Activated CD4-positive, alpha-beta memory T cell treated with anti-CD3 and anti-CD28 coated beads for 36 hours (primary cell): ENCODE measurements at regions of chr5 and their contacts with region 1.

Region 1: GRCh38 chr5:33440482-33441240 is at the start of gene TARS1:
- DNase-seq: peak; percentile 97
- H3K4me3 Mint-ChIP-seq: no peak within 1 kb of the TSS
- H3K27ac Mint-ChIP-seq: no peak within 1 kb of the TSS
- H3K4me1 Mint-ChIP-seq: peaks cover 24% of the 10 kb centered on the region
- H3K27me3 Mint-ChIP-seq: no peaks in the 10 kb centered on the region
- total RNA-seq, gene TARS1: 240 to 248 TPM

Region 2: GRCh38 chr5:32444431-32445286 is 996.0 kb before region 1 on chr5 and contains the start of gene ZFR:
- CTCF ChIA-PET with region 1: no interaction called
- POLR2A ChIA-PET with region 1: no interaction called
- intact Hi-C with region 1: loop called (anchors 2 kb)
- DNase-seq: peak; percentile 96
- H3K4me3 Mint-ChIP-seq: peak within 1 kb of the TSS; percentile 92
- H3K27ac Mint-ChIP-seq: peak within 1 kb of the TSS; percentile 98
- H3K4me1 Mint-ChIP-seq: peaks cover 38% of the 10 kb centered on the region
- H3K27me3 Mint-ChIP-seq: no peaks in the 10 kb centered on the region
- total RNA-seq, gene ZFR: 58.1 to 61.1 TPM

Region 3: DNA sequence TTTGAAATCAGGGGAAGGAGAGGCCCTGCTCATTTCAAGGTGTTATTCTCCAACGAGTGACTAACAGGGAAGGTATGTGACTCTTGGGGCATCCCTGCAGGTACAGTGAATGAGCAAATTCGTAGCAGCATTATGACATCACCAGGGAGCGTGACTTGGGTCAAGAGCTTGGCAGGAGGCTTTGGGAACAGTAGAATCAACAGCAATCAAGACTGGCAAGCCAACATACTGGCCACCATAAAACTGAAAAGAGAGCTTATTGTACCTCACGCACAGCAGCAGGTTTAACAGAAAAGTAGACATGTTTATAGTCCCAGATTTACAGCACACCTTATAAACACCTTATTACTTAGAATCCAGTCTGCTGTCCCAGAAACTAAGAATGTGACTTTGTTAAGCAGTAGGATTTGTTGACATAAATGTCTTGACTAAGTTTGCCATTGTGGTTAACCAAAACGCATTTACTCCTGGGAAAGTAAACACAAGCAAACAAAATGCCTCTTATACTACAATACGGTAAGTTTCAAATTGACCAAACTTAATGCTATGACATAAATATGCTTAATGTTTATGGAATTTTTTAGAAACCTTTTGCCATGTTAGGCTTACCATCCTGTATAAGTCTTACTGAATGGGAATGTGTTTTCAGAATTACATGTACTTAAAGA is 431.8 kb before region 1 on chr5:
- CTCF ChIA-PET with region 1: no interaction called
- POLR2A ChIA-PET with region 1: no interaction called
- intact Hi-C with region 1: no loop called
- DNase-seq: no peak
- H3K4me3 Mint-ChIP-seq: no peak overlapping the region
- H3K27ac Mint-ChIP-seq: no peak overlapping the region
- H3K4me1 Mint-ChIP-seq: no peaks in the 10 kb centered on the region
- H3K27me3 Mint-ChIP-seq: no peaks in the 10 kb centered on the region

Region 4: DNA sequence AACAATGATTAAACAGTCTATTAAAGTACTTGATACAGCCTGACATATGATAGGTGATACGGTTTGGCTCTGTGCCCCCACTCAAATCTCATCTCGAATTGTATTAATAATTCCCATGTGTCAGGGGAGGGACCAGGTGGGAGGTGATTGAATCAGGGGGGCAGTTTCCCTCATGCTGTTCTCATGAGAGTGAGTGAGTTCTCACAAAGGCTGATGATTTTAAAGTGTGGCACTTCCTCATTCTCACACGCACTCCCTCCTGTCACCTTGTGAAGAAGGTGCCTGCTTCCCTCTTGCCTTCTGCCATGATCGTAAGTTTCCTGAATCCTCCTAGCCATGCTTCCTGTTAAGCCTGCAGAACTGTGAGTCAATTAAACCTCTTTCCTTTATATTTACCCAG is 40.0 kb before region 1 on chr5:
- CTCF ChIA-PET with region 1: no interaction called
- POLR2A ChIA-PET with region 1: no interaction called
- intact Hi-C with region 1: no loop called
- DNase-seq: no peak
- H3K4me3 Mint-ChIP-seq: no peak overlapping the region
- H3K27ac Mint-ChIP-seq: no peak overlapping the region
- H3K4me1 Mint-ChIP-seq: no peaks in the 10 kb centered on the region
- H3K27me3 Mint-ChIP-seq: peaks cover 5% of the 10 kb centered on the region

Region 5: DNA sequence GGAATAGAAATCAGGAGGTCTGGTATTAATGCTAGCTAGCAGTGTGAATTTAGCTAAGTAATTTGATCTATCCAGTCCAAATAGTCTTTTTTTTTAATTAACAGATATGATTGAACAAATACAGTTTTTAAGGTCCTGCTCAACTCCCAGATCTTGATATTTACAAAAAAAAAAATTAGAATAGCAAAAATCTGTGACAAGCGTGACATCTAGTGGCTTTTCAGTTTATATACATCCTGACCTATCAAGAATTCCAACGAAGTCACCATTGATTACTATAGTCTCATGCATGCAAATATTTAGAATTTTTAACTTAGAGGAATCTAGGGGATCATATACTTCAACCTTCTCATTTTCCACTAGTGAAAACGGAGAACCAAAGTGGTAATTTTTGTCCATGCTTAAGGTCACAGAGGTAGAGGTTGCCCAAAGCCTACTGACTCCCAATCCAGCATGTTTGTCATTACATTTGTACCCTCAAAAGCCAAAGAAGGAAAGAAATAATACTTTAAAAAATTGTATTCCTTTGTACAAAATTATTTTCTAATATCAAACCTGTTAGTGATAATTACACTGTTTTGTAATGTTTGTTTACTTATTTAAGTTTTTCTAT is 17.5 kb before region 1 on chr5:
- CTCF ChIA-PET with region 1: interaction called, 11 read pairs
- POLR2A ChIA-PET with region 1: no interaction called
- intact Hi-C with region 1: no loop called
- DNase-seq: no peak
- H3K4me3 Mint-ChIP-seq: no peak overlapping the region
- H3K27ac Mint-ChIP-seq: no peak overlapping the region
- H3K4me1 Mint-ChIP-seq: no peaks in the 10 kb centered on the region
- H3K27me3 Mint-ChIP-seq: peaks cover 6% of the 10 kb centered on the region

Region 6: GRCh38 chr5:33850100-33850594 is 409.5 kb after region 1 on chr5:
- CTCF ChIA-PET with region 1: no interaction called
- POLR2A ChIA-PET with region 1: no interaction called
- intact Hi-C with region 1: loop called (anchors 1 kb)
- DNase-seq: peak; percentile 73
- H3K4me3 Mint-ChIP-seq: no peak overlapping the region
- H3K27ac Mint-ChIP-seq: no peak overlapping the region
- H3K4me1 Mint-ChIP-seq: peaks cover 10% of the 10 kb centered on the region
- H3K27me3 Mint-ChIP-seq: peaks cover 2% of the 10 kb centered on the region

Region 7: GRCh38 chr5:33969572-33970452 is 529.2 kb after region 1 on chr5:
- CTCF ChIA-PET with region 1: interaction called, 14 read pairs
- POLR2A ChIA-PET with region 1: no interaction called
- intact Hi-C with region 1: loop called (anchors 1 kb)
- DNase-seq: no peak
- H3K4me3 Mint-ChIP-seq: no peak overlapping the region
- H3K27ac Mint-ChIP-seq: no peak overlapping the region
- H3K4me1 Mint-ChIP-seq: peaks cover 14% of the 10 kb centered on the region
- H3K27me3 Mint-ChIP-seq: no peaks in the 10 kb centered on the region

Region 8: GRCh38 chr5:34464830-34465229 is 1024.2 kb after region 1 on chr5:
- CTCF ChIA-PET with region 1: no interaction called
- POLR2A ChIA-PET with region 1: no interaction called
- intact Hi-C with region 1: loop called (anchors 5 kb)
- DNase-seq: no peak
- H3K4me3 Mint-ChIP-seq: no peak overlapping the region
- H3K27ac Mint-ChIP-seq: no peak overlapping the region
- H3K4me1 Mint-ChIP-seq: peaks cover 4% of the 10 kb centered on the region
- H3K27me3 Mint-ChIP-seq: peaks cover 16% of the 10 kb centered on the region

Region 9: DNA sequence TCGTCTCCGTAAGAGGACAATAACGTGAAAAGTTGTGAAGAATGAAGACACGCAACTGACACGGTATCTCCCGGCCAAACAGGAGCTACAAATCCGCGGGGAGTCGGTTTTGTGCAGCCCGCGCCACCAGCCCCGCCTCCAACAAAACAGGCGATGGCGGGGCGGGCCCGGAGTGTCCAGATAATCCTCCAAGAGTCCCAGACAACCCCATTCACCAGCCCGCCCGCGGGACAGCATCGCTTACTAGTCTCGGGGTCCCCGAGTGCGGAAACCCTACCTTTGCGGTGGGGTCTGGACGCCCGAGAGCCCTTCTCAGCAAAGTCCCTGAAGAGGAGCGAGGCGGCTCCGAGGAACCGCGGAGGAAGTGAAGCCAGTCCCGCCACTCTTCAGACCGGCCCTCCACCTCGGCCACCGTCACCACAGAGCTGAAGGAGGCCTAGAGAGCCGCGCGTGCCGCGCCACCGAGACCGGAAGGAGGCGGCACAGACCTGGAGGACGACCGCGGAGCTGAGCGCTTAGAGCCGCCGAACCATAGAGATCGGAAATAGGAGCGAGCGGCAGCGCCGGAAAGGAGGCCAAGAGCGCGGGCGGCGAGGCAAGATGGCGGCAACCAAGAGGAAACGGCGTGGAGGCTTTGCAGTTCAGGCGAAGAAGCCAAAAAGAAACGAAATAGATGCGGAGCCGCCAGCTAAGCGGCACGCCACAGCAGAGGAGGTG is 1474.6 kb after region 1 on chr5 and contains the starts of genes BRIX1 and RAD1:
- CTCF ChIA-PET with region 1: no interaction called
- POLR2A ChIA-PET with region 1: no interaction called
- intact Hi-C with region 1: loop called (anchors 1 kb)
- DNase-seq: peak; percentile 97
- H3K4me3 Mint-ChIP-seq: no peak within 1 kb of the TSS
- H3K27ac Mint-ChIP-seq: no peak within 1 kb of the TSS
- H3K4me1 Mint-ChIP-seq: peaks cover 23% of the 10 kb centered on the region
- H3K27me3 Mint-ChIP-seq: no peaks in the 10 kb centered on the region
- total RNA-seq, gene BRIX1: 67.4 to 71.4 TPM
- total RNA-seq, gene RAD1: 36.2 to 38.3 TPM